Uterus (tissue), 4 donors: ENCODE measurements at regions of chr19 and their contacts with region 1.

Region 1: DNA sequence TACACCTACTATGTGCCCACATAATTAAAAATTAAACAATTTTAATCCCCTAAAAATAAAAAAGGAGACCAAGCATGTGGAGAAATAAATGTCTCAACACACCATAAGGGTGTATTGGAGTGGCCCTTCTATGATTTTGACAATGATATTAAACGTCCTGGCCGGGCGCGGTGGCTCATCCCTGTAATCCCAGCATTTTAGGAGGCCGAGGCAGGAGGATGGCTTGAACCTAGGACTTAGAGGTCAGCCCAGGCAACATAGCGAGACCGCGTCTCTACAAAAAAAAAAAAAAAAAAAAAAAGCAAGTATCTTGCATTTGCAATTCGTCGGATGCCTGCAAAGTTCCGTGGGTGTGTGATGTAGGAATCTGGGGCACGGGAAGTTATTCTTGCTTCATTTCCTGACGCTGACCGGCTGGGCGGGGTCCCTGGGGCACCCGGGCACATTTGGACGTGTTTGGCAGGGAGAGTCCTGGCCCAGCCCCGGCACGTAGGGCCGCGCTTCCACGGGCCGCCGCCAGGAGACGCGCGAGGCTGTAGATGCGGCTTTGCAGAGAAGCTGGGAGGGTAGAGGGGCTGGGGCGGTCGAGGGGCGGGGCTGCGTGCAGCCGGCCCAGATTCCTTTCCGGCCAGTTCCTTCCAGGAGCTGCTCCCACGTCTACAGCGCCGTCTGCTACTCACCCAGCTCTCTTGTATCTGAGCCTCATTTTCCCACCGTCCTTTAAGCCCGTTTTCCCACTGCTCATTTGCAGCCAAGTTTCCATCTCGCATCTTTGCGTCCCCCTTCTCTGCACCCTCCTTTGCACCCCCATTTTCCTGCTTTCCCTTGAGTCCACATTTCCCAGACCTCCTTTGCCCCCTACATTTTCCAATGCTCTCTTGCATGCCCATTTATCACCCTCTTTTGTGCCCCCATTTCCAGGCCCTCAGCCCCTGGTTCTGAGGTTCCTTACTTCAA is 2.2 kb upstream of the TSPAN16 start:
- DNase-seq: peak; percentile 94 to 97
- H3K4me3 ChIP-seq: peak overlapping the region in 1 of 2 donors; percentile 23
- H3K27ac ChIP-seq: peak overlapping the region; percentile 35 to 69
- H3K4me1 ChIP-seq: no peaks in the 10 kb centered on the region
- H3K27me3 ChIP-seq: no peaks in the 10 kb centered on the region
- CTCF ChIP-seq: peak; percentile 99
- POLR2A ChIP-seq: peak in 1 of 2 donors; percentile 27

Region 2: DNA sequence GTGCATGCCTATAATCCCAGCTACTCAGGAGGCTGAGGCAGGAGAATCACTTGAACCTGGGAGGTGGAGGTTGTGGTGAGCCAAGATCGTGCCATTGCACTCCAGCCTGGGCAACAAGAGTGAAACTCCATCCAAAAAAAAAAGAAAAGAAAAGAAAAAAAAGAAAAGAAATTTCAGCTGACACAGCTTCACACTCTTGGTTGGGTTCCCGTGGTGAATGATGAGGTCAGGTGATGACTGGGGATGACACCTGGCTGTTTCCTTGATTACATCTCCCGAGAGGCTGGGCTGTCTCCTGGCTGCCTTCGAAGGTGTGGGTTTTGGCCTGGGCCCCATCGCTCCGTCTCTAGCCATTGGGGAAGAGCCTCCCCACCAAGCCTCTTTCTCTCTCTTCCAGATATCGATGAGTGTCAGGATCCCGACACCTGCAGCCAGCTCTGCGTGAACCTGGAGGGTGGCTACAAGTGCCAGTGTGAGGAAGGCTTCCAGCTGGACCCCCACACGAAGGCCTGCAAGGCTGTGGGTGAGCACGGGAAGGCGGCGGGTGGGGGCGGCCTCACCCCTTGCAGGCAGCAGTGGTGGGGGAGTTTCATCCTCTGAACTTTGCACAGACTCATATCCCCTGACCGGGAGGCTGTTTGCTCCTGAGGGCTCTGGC is 182.5 kb before region 1 on chr19:
- intact Hi-C with region 1: no loop called
- DNase-seq: no peak
- H3K4me3 ChIP-seq: no peak overlapping the region
- H3K27ac ChIP-seq: no peak overlapping the region
- H3K4me1 ChIP-seq: no peaks in the 10 kb centered on the region
- H3K27me3 ChIP-seq: no peaks in the 10 kb centered on the region
- CTCF ChIP-seq: no peak
- POLR2A ChIP-seq: no peak

Region 3: GRCh38 chr19:11342429-11342828 is 48.7 kb after region 1 on chr19:
- intact Hi-C with region 1: no loop called
- DNase-seq: no peak
- H3K4me3 ChIP-seq: no peak overlapping the region
- H3K27ac ChIP-seq: no peak overlapping the region
- H3K4me1 ChIP-seq: peaks cover 0 to 9% of the 10 kb centered on the region in 2 donors
- H3K27me3 ChIP-seq: no peaks in the 10 kb centered on the region
- CTCF ChIP-seq: no peak
- POLR2A ChIP-seq: no peak

Region 4: GRCh38 chr19:11355160-11356073 is 61.7 kb after region 1 on chr19 and contains the start of gene PLPPR2:
- intact Hi-C with region 1: loop called (anchors 10 kb)
- DNase-seq: peak; percentile 96 to 97
- H3K4me3 ChIP-seq: peak within 1 kb of the TSS; percentile 77 to 84
- H3K27ac ChIP-seq: peak within 1 kb of the TSS; percentile 72 to 88
- H3K4me1 ChIP-seq: no peaks in the 10 kb centered on the region
- H3K27me3 ChIP-seq: no peaks in the 10 kb centered on the region
- CTCF ChIP-seq: no peak
- POLR2A ChIP-seq: peak; percentile 70 to 78
- total RNA-seq, gene PLPPR2: 4.1 to 71.7 (median 23.7) TPM

Region 5: GRCh38 chr19:11505032-11505503 is 211.4 kb after region 1 on chr19:
- intact Hi-C with region 1: loop called (anchors 10 kb)
- DNase-seq: peak; percentile 96 to 97
- H3K4me3 ChIP-seq: peak overlapping the region; percentile 50 to 89
- H3K27ac ChIP-seq: peak overlapping the region; percentile 87 to 98
- H3K4me1 ChIP-seq: no peaks in the 10 kb centered on the region
- H3K27me3 ChIP-seq: no peaks in the 10 kb centered on the region
- CTCF ChIP-seq: peak in 1 of 4 experiments; percentile 20
- POLR2A ChIP-seq: no peak